Naive thymus-derived CD4-positive, alpha-beta T cell (primary cell): ENCODE measurements at regions of chr7 and their contacts with region 1.

Region 1: DNA sequence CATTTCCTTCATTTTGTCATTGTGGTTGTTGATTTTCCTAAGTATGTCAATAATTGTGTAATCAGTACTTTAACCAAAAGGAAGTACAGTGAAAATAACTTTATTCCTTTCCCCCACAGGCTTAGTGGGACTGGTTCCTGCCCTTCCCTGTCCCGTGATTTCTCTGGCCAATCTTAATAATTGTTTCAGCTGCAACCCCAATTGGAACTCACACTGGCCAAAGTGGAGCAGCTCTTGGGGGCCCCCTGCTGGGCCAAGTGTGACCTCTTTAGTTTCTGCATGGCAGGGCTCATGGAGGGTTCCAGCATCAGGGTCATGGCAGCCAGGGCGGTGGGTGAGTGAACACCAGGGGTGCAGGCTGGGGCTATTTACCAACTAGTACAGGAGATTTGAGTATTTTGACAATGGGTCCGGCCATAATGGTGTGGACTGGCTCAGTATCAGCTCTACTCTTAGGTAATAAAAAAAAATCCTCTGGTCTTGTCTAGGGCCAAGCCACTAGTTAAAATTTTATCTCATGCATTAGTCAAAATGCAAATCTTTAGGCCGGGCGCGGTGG is 31.7 kb downstream of the CYCS start:
- DNase-seq: peak; percentile 33 to 80 (median 60)
- ATAC-seq: peak; percentile 90
- H3K4me3 ChIP-seq: no peak overlapping the region
- H3K4me3 Mint-ChIP-seq: no peak overlapping the region
- H3K27ac ChIP-seq: no peak overlapping the region
- H3K27ac Mint-ChIP-seq: no peak overlapping the region
- H3K4me1 ChIP-seq: no peaks in the 10 kb centered on the region
- H3K4me1 Mint-ChIP-seq: peaks cover 0 to 15% (median 8%) of the 10 kb centered on the region in 7 donors
- H3K27me3 ChIP-seq: no peaks in the 10 kb centered on the region
- H3K27me3 Mint-ChIP-seq: peaks cover 0 to 14% (median 0%) of the 10 kb centered on the region in 5 donors

Region 2: GRCh38 chr7:24290004-24290641 is 803.2 kb before region 1 on chr7:
- CTCF ChIA-PET with region 1: no interaction called
- POLR2A ChIA-PET with region 1: no interaction called
- intact Hi-C with region 1: loop called (anchors 1 to 2 kb)
- DNase-seq: peak in 8 of 9 donors; percentile 17 to 51 (median 40)
- ATAC-seq: peak; percentile 83
- H3K4me3 ChIP-seq: no peak overlapping the region
- H3K4me3 Mint-ChIP-seq: no peak overlapping the region
- H3K27ac ChIP-seq: no peak overlapping the region
- H3K27ac Mint-ChIP-seq: no peak overlapping the region
- H3K4me1 ChIP-seq: peaks cover 0 to 5% of the 10 kb centered on the region in 2 donors
- H3K4me1 Mint-ChIP-seq: peaks cover 6 to 19% (median 12%) of the 10 kb centered on the region in 7 donors
- H3K27me3 ChIP-seq: peaks cover 0 to 16% of the 10 kb centered on the region in 2 donors
- H3K27me3 Mint-ChIP-seq: peaks cover 48 to 56% (median 50%) of the 10 kb centered on the region in 5 donors

Region 3: DNA sequence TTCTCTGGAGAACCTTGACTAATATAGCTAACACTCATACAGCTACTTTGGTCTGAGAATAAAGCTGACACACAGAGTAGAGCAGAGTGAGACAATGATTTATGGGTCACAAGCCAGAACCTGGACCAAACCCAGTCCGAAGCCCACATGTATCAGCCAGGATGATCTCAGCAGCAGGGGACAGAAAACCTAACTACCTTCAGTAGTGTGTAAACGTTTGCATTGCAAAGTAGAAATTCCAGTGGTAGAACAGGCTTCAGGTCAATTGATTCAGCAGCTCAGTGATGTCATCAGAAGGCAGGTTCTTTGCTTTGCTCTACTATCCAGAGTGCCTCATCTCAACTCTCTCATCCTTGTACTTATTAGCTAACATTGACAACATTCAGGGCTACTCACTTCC is 582.6 kb before region 1 on chr7:
- CTCF ChIA-PET with region 1: no interaction called
- POLR2A ChIA-PET with region 1: no interaction called
- intact Hi-C with region 1: no loop called
- DNase-seq: no peak
- ATAC-seq: no peak
- H3K4me3 ChIP-seq: no peak overlapping the region
- H3K4me3 Mint-ChIP-seq: no peak overlapping the region
- H3K27ac ChIP-seq: no peak overlapping the region
- H3K27ac Mint-ChIP-seq: no peak overlapping the region
- H3K4me1 ChIP-seq: no peaks in the 10 kb centered on the region
- H3K4me1 Mint-ChIP-seq: no peaks in the 10 kb centered on the region
- H3K27me3 ChIP-seq: no peaks in the 10 kb centered on the region
- H3K27me3 Mint-ChIP-seq: peaks cover 0 to 11% (median 7%) of the 10 kb centered on the region in 5 donors

Region 4: DNA sequence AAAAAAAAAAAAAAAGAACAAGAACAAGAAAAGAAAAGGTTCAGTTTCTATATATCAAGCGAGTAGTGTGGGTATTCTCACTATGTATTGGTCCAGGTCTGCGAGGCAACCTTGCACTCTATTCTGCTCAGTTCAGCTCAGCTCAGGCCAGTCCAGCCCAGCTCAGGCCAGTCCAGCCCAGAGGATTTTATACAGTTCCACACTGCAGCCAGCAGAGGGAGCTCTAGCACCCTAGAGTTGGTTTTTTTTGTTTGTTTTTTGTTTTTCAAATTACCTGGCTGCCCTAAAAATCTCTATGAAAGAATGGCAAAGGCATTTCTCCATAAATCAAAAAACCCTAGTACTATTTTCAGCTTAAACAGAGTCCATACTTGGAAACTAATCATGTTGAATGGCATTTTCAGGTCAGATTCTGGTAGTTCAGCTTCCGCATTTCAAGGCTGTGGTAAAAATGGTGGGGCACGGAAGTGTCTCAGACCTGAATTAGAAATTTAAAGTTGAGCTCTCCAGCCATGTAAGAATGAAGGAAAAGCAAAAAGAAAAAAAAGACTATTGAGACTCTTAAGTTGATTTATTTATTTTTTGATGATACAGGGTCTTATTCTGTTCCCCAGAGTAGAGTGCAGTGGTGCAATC is 280.9 kb before region 1 on chr7:
- CTCF ChIA-PET with region 1: interaction called, 50 read pairs
- POLR2A ChIA-PET with region 1: no interaction called
- intact Hi-C with region 1: loop called (anchors 1 kb)
- DNase-seq: peak in 8 of 9 donors; percentile 6 to 52 (median 32)
- ATAC-seq: peak; percentile 90
- H3K4me3 ChIP-seq: no peak overlapping the region
- H3K4me3 Mint-ChIP-seq: no peak overlapping the region
- H3K27ac ChIP-seq: no peak overlapping the region
- H3K27ac Mint-ChIP-seq: no peak overlapping the region
- H3K4me1 ChIP-seq: no peaks in the 10 kb centered on the region
- H3K4me1 Mint-ChIP-seq: peaks cover 0 to 6% (median 0%) of the 10 kb centered on the region in 7 donors
- H3K27me3 ChIP-seq: no peaks in the 10 kb centered on the region
- H3K27me3 Mint-ChIP-seq: no peaks in the 10 kb centered on the region

Region 5: GRCh38 chr7:25075459-25075858 is 17.9 kb before region 1 on chr7:
- CTCF ChIA-PET with region 1: interaction called, 12 read pairs
- POLR2A ChIA-PET with region 1: interaction called, 6 read pairs
- intact Hi-C with region 1: loop called (anchors 1 to 2 kb)
- DNase-seq: peak in 1 of 9 donors; percentile 27
- ATAC-seq: no peak
- H3K4me3 ChIP-seq: no peak overlapping the region
- H3K4me3 Mint-ChIP-seq: no peak overlapping the region
- H3K27ac ChIP-seq: no peak overlapping the region
- H3K27ac Mint-ChIP-seq: no peak overlapping the region
- H3K4me1 ChIP-seq: no peaks in the 10 kb centered on the region
- H3K4me1 Mint-ChIP-seq: peaks cover 0 to 10% (median 0%) of the 10 kb centered on the region in 7 donors
- H3K27me3 ChIP-seq: no peaks in the 10 kb centered on the region
- H3K27me3 Mint-ChIP-seq: peaks cover 0 to 15% (median 0%) of the 10 kb centered on the region in 5 donors